CD4-positive, alpha-beta memory T cell (primary cell): ENCODE measurements at regions of chr9 and their contacts with region 1.

Region 1: DNA sequence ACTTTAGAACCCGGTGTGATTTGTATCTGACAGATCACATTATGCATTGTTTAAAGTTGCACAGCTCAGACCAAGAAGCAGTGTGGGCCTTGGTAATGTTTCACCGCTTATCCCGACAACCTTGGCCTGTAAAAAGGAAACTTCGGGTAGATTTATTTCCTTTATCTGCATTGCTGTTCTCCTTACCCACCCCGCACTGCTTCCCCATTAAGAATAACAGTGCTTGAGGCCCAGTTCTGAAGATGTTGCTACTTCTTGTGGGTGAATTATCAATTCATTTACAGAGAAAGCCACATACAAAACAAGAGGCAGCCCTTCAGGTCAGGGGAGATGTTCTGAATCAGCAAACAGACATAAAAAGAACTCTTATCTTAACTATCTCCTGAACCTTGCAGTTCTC is 8.4 kb downstream of the SMARCA2 start:
- DNase-seq: no peak
- H3K4me3 ChIP-seq: no peak overlapping the region
- H3K4me3 Mint-ChIP-seq: peak overlapping the region; percentile 9 to 79 (median 76)
- H3K27ac ChIP-seq: peak overlapping the region; percentile 37
- H3K27ac Mint-ChIP-seq: peak overlapping the region; percentile 84 to 96 (median 91)
- H3K4me1 ChIP-seq: peaks cover 100% of the 10 kb centered on the region
- H3K4me1 Mint-ChIP-seq: peaks cover 79 to 100% (median 92%) of the 10 kb centered on the region in 4 donors
- H3K27me3 ChIP-seq: no peaks in the 10 kb centered on the region
- H3K27me3 Mint-ChIP-seq: no peaks in the 10 kb centered on the region

Region 2: DNA sequence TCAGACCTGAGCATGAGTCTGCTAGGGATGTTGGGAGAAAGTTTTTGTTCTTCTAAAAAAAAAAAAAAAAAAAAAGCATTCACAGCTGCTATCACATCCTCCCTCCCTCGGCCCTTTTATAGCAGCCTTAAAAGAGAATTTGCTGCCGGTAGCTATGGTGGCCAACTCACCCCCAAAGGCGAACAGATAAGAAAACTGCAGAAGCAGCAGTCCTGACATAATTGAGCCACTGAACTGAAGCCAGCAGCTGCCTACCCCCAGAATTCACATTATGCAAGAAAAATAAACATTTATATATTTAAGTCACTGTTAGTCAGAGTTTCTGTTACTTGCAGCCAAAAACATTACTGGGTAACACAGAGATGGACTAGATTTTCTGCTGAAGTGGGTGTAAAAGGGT is 132.7 kb before region 1 on chr9:
- CTCF ChIA-PET with region 1: no interaction called
- POLR2A ChIA-PET with region 1: no interaction called
- intact Hi-C with region 1: no loop called
- DNase-seq: no peak
- H3K4me3 ChIP-seq: no peak overlapping the region
- H3K4me3 Mint-ChIP-seq: no peak overlapping the region
- H3K27ac ChIP-seq: no peak overlapping the region
- H3K27ac Mint-ChIP-seq: no peak overlapping the region
- H3K4me1 ChIP-seq: no peaks in the 10 kb centered on the region
- H3K4me1 Mint-ChIP-seq: no peaks in the 10 kb centered on the region
- H3K27me3 ChIP-seq: no peaks in the 10 kb centered on the region
- H3K27me3 Mint-ChIP-seq: no peaks in the 10 kb centered on the region

Region 3: GRCh38 chr9:1979741-1980367 is 43.7 kb before region 1 on chr9:
- CTCF ChIA-PET with region 1: no interaction called
- POLR2A ChIA-PET with region 1: no interaction called
- intact Hi-C with region 1: no loop called
- DNase-seq: no peak
- H3K4me3 ChIP-seq: no peak overlapping the region
- H3K4me3 Mint-ChIP-seq: no peak overlapping the region
- H3K27ac ChIP-seq: no peak overlapping the region
- H3K27ac Mint-ChIP-seq: peak overlapping the region in 1 of 7 donors; percentile 64
- H3K4me1 ChIP-seq: no peaks in the 10 kb centered on the region
- H3K4me1 Mint-ChIP-seq: no peaks in the 10 kb centered on the region
- H3K27me3 ChIP-seq: no peaks in the 10 kb centered on the region
- H3K27me3 Mint-ChIP-seq: no peaks in the 10 kb centered on the region

Region 4: DNA sequence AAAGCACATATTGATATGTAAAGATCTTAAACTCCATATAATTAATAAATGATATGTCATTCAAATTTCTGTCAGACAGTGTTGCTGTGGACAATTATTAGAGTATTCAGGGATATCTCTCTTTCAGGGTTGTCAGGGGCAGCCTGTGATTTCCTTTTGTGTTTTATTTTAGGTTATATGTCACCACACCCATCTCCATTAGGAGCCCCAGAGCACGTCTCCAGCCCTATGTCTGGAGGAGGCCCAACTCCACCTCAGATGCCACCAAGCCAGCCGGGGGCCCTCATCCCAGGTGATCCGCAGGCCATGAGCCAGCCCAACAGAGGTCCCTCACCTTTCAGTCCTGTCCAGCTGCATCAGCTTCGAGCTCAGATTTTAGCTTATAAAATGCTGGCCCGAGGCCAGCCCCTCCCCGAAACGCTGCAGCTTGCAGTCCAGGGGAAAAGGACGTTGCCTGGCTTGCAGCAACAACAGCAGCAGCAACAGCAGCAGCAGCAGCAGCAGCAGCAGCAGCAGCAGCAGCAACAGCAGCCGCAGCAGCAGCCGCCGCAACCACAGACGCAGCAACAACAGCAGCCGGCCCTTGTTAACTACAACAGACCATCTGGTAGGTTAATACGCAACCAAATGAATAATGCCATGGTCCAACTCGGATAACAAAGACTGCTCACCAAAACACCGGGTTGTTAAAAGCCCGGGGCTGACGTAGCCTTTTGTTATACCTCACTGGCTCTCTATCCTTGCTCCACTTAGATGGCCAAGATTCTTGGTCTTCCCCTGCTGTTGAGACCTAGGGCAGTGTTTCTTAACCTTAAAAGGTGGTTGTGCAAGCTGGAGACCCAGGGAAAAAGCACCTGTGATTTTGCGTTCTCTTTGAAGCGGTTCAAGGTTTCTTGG is 16.0 kb after region 1 on chr9:
- CTCF ChIA-PET with region 1: interaction called, 3 read pairs
- POLR2A ChIA-PET with region 1: interaction called, 8 read pairs
- intact Hi-C with region 1: loop called (anchors 2 kb)
- DNase-seq: peak in 1 of 5 donors; percentile 22
- H3K4me3 ChIP-seq: no peak overlapping the region
- H3K4me3 Mint-ChIP-seq: no peak overlapping the region
- H3K27ac ChIP-seq: no peak overlapping the region
- H3K27ac Mint-ChIP-seq: peak overlapping the region in 1 of 7 donors; percentile 14
- H3K4me1 ChIP-seq: peaks cover 18% of the 10 kb centered on the region
- H3K4me1 Mint-ChIP-seq: peaks cover 39 to 65% (median 56%) of the 10 kb centered on the region in 4 donors
- H3K27me3 ChIP-seq: no peaks in the 10 kb centered on the region
- H3K27me3 Mint-ChIP-seq: no peaks in the 10 kb centered on the region

Region 5: DNA sequence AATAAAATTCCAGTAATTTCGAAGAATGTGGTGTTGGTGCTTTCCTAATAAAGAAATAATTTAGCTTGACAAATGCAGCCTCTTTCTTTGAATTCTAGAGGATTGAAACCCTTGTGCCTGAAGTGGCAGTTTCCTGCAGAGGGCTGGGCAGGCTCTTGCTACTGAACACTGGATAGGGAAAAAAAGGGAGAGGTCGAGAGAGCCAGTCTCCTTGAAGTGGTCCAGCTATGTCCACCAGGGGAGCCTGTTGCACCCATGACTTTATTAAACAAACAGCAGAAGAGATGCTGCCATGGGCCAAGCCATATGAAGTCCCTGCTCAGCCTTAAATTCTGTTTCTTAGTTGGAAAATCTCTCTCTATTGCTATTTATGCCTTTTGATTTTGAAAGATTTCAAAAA is 170.0 kb after region 1 on chr9:
- CTCF ChIA-PET with region 1: no interaction called
- POLR2A ChIA-PET with region 1: no interaction called
- intact Hi-C with region 1: no loop called
- DNase-seq: no peak
- H3K4me3 ChIP-seq: no peak overlapping the region
- H3K4me3 Mint-ChIP-seq: no peak overlapping the region
- H3K27ac ChIP-seq: no peak overlapping the region
- H3K27ac Mint-ChIP-seq: peak overlapping the region in 1 of 7 donors; percentile 10
- H3K4me1 ChIP-seq: no peaks in the 10 kb centered on the region
- H3K4me1 Mint-ChIP-seq: peaks cover 0 to 2% (median under 1%) of the 10 kb centered on the region in 4 donors
- H3K27me3 ChIP-seq: no peaks in the 10 kb centered on the region
- H3K27me3 Mint-ChIP-seq: no peaks in the 10 kb centered on the region